ENCODE measurements at regions of chr17 and their contacts with region 1.

Region 1: GRCh38 chr17:28612936-28613872 is 781 bp downstream of the RSKR start:
- DNase-seq: peak in 1 of 2 experiments; percentile 71
- H3K4me3 ChIP-seq: no peak overlapping the region
- H3K27ac ChIP-seq: no peak overlapping the region
- H3K4me1 ChIP-seq: no peaks in the 10 kb centered on the region
- H3K27me3 ChIP-seq: no peaks in the 10 kb centered on the region
- CTCF ChIP-seq: peak; percentile 60 to 77 (median 64)
- EP300 ChIP-seq: no peak
- POLR2A ChIP-seq: no peak; a peak in 1 of 3 replicates
- RAD21 ChIP-seq: peak; percentile 53 to 65

Region 2: DNA sequence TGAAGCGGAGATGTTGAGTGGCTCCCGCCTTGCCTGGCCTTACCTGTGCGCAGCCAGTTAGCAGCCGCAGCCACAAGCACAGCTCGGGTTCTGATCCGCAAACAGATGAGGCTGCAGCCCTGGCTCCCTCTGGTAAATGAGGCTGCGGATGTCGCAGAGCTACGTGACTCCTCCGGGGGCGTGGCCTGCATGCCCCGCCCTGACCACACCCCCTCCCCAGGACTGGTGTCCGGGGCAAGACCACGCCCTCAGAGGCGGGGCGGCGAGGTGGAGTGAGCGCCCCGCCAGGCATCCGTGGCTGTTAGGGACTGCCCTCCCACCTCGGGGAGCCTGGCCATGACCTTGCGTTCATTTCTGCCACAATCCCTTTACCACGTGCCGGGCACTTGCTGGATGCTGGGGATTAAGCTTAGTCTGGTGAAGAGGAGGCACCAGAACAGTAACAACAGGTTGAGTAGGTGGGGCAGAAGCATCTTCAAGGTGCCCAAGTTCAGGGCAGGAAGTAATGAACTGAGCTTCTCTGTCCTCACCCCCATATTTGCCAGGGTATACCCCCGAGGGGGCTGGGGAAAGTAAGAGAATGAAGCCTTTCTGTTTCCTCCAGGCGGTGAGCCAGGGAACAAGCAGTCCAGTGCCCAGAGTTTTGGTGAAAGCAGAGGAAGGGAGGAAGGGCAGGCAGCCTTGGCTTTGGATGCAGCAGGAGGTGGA is 36.3 kb before region 1 on chr17 and contains the start of gene ALDOC:
- CTCF ChIA-PET with region 1: interaction called, 8 read pairs
- POLR2A ChIA-PET with region 1: interaction called, 21 read pairs
- DNase-seq: peak; percentile 97 to 99
- H3K4me3 ChIP-seq: peak within 1 kb of the TSS; percentile 12 to 54 (median 20); a peak in 5 of 8 replicates
- H3K27ac ChIP-seq: no peak within 1 kb of the TSS
- H3K4me1 ChIP-seq: peaks cover 2 to 9% (median 5%) of the 10 kb centered on the region in 4 experiments; a peak in 6 of 7 replicates
- H3K27me3 ChIP-seq: peaks cover 0 to 8% (median 4%) of the 10 kb centered on the region in 4 experiments; a peak in 4 of 7 replicates
- CTCF ChIP-seq: no peak
- EP300 ChIP-seq: no peak
- POLR2A ChIP-seq: peak; percentile 80 to 84
- RAD21 ChIP-seq: no peak
- total RNA-seq, gene ALDOC: 51.3 and 51.6 TPM in 2 replicates

Region 3: DNA sequence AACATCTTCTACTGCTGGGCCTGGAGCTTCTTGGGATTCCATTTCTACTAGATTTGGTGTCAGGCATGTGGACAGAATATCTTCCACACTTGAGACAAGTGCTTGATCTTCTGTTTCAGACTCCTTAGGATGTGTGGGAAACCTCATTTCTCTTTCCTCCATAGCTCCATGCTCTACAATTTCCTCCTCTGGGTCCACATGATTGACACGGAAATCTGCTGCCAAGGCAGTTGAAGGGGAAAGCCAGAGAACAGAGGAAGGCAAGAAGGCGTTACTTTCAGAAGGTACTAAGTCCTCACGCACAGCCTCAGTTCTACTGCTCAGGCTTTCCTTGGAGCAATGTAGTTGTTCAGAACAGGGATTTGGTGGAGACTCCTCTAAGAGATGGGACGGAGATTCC is 20.9 kb before region 1 on chr17:
- CTCF ChIA-PET with region 1: interaction called, 11 read pairs
- POLR2A ChIA-PET with region 1: interaction called, 83 read pairs
- DNase-seq: no peak
- H3K4me3 ChIP-seq: no peak overlapping the region
- H3K27ac ChIP-seq: no peak overlapping the region
- H3K4me1 ChIP-seq: no peaks in the 10 kb centered on the region
- H3K27me3 ChIP-seq: no peaks in the 10 kb centered on the region
- CTCF ChIP-seq: no peak
- EP300 ChIP-seq: no peak
- POLR2A ChIP-seq: no peak
- RAD21 ChIP-seq: no peak

Region 4: GRCh38 chr17:28598799-28599310 is 14.3 kb before region 1 on chr17 and contains the start of gene SPAG5:
- CTCF ChIA-PET with region 1: interaction called, 45 read pairs
- POLR2A ChIA-PET with region 1: interaction called, 83 read pairs
- DNase-seq: peak; percentile 81 to 96
- H3K4me3 ChIP-seq: peak within 1 kb of the TSS; percentile 78 to 93 (median 92)
- H3K27ac ChIP-seq: peak within 1 kb of the TSS; percentile 93
- H3K4me1 ChIP-seq: peaks cover 0 to 4% (median 0%) of the 10 kb centered on the region in 4 experiments; a peak in 2 of 7 replicates
- H3K27me3 ChIP-seq: no peaks in the 10 kb centered on the region; a peak in 1 of 7 replicates
- CTCF ChIP-seq: 0 out of 4 replicates have a peak, but pooled peaks of 1 of the 3 experiments have one; percentile 17
- EP300 ChIP-seq: no peak
- POLR2A ChIP-seq: peak; percentile 86 to 92
- RAD21 ChIP-seq: no peak
- total RNA-seq, gene SPAG5: 115 and 129 TPM in 2 replicates

Region 5: GRCh38 chr17:28623696-28624095 is 10.5 kb after region 1 on chr17:
- CTCF ChIA-PET with region 1: interaction called, 21 read pairs
- POLR2A ChIA-PET with region 1: interaction called, 163 read pairs
- DNase-seq: no peak
- H3K4me3 ChIP-seq: no peak overlapping the region
- H3K27ac ChIP-seq: no peak overlapping the region
- H3K4me1 ChIP-seq: no peaks in the 10 kb centered on the region
- H3K27me3 ChIP-seq: no peaks in the 10 kb centered on the region
- CTCF ChIP-seq: no peak
- EP300 ChIP-seq: no peak
- POLR2A ChIP-seq: no peak
- RAD21 ChIP-seq: no peak

Region 6: DNA sequence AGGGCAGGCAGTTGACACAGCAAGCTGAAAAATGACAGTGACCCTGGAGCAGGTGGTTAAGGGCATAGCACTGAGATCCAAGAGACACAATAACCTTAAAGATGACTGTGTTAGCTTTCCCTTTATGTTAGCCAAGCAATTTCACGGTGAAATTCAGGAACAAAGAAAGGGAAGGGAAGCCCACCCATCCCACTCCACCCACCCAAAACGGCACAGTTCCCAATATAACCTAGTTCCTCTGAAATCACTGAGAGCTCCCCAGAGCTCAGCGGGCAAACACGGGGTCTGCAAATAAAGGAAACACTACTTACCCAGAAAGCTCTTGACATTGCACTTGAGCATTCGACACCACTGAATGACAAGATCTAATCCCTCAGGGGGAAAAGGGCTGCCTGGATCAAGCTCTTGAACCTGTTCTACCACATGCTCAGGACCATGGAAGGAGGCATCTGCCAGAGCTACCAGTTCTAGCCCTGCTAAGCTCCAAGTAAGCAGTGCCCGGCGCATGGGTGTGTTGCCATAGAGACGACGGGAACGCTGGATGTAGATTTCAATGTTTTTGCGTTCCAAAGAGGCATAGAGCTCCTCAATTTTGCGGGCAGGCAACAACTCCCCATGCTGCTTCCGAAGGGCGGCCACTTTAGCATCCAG is 21.1 kb after region 1 on chr17:
- CTCF ChIA-PET with region 1: interaction called, 14 read pairs
- POLR2A ChIA-PET with region 1: interaction called, 163 read pairs
- DNase-seq: no peak
- H3K4me3 ChIP-seq: no peak overlapping the region
- H3K27ac ChIP-seq: no peak overlapping the region
- H3K4me1 ChIP-seq: no peaks in the 10 kb centered on the region
- H3K27me3 ChIP-seq: no peaks in the 10 kb centered on the region
- CTCF ChIP-seq: no peak
- EP300 ChIP-seq: no peak
- POLR2A ChIP-seq: no peak
- RAD21 ChIP-seq: no peak

Region 7: DNA sequence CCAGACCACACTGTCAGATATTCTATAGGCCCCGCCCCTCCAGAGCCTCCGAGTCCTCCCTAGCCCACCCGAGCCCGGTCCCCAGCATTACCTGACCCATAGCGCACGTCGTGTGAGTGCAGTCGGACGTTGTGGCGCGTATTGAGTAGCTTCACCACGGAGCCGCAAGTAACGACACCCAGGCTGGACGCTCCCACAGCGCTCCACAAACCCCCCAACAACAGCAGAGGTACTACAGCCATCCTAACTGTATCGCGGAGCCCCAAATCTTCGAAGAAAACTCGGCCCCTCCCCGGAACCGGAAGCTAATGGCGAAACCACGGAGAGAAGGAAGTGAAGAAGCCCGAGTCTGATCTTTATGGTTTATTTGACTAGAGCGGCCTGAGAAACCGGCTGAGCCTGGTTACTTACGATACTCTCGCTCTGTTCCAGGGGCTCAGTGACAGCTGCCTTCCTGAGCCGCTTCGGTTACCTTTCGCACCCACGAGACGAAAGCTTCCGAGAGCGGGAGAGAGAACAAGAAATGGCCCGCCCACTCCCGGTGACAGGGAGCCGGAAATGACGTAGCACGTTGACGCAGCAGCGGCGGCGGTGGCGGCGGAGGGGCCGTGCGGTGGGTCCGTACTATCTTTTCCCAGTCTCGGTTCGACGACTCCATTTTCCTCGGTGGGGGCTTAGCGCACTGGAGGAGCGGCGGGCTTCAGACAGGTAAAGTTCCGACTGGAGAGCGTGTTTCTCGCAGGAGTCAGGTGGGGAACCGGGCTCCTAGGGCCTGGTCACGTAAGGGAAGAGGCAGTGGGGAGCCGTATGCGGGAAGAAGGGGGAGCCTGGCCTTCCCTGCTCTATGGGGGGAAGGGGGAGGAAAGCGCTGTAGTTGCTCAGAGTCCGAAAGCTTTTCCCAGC is 48.7 kb after region 1 on chr17 and contains the starts of genes SDF2 and SUPT6H:
- CTCF ChIA-PET with region 1: no interaction called
- POLR2A ChIA-PET with region 1: interaction called, 12 read pairs
- DNase-seq: peak in 1 of 2 experiments; percentile 98
- H3K4me3 ChIP-seq: peak within 1 kb of the TSS; percentile 85 to 99 (median 96)
- H3K27ac ChIP-seq: peak within 1 kb of the TSS; percentile 92
- H3K4me1 ChIP-seq: peaks cover 0 to 2% (median 0%) of the 10 kb centered on the region in 4 experiments; a peak in 3 of 7 replicates
- H3K27me3 ChIP-seq: no peaks in the 10 kb centered on the region
- CTCF ChIP-seq: no peak
- EP300 ChIP-seq: no peak
- POLR2A ChIP-seq: peak; percentile 75 to 76; a peak in 2 of 3 replicates
- RAD21 ChIP-seq: no peak
- total RNA-seq, gene SDF2: 43.6 and 44.8 TPM in 2 replicates
- total RNA-seq, gene SUPT6H: 59.9 and 62.4 TPM in 2 replicates

Region 8: GRCh38 chr17:28737859-28738679 is 124.9 kb after region 1 on chr17:
- CTCF ChIA-PET with region 1: no interaction called
- POLR2A ChIA-PET with region 1: no interaction called
- DNase-seq: no peak
- H3K4me3 ChIP-seq: no peak overlapping the region
- H3K27ac ChIP-seq: no peak overlapping the region
- H3K4me1 ChIP-seq: peaks cover 0 to 2% (median 0%) of the 10 kb centered on the region in 4 experiments; a peak in 1 of 7 replicates
- H3K27me3 ChIP-seq: no peaks in the 10 kb centered on the region
- CTCF ChIP-seq: no peak
- EP300 ChIP-seq: no peak
- POLR2A ChIP-seq: no peak
- RAD21 ChIP-seq: no peak

Measured in H1 (cell line).